Panc1 (cell line): ENCODE measurements at regions of chr7 and their contacts with region 1.

Region 1: GRCh38 chr7:77188731-77189437 is 10.7 kb downstream of the FGL2 start:
- DNase-seq: no peak
- ATAC-seq: no peak
- H3K4me3 ChIP-seq: no peak overlapping the region
- H3K27ac ChIP-seq: no peak overlapping the region
- H3K4me1 ChIP-seq: no peaks in the 10 kb centered on the region; the same call in 1 of the 2 replicates
- H3K27me3 ChIP-seq: no peaks in the 10 kb centered on the region
- CTCF ChIP-seq: no peak

Region 2: DNA sequence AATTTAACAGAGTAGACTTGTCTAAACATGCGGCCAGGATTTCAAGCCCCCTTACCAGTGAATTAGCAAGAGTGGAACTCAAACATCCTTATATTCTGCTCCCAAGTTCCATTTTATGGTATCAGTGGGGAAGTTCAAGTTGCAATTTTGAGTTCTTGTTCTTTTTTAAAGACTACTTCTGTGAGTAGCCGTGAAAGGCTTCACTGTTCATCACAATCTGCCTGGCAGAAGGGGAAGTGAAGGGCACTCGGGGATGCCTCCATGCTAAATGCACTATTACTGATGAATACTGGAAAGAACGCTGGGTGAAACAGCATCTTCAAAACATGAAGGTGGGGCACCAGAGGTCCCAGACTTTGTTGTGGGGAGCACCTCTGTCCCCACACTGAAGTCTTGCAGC is 33.2 kb after region 1 on chr7:
- CTCF ChIA-PET with region 1: no interaction called
- POLR2A ChIA-PET with region 1: no interaction called
- in situ Hi-C with region 1: no loop called
- intact Hi-C with region 1: loop called (anchors 1 kb)
- DNase-seq: no peak
- ATAC-seq: no peak
- H3K4me3 ChIP-seq: no peak overlapping the region
- H3K27ac ChIP-seq: no peak overlapping the region
- H3K4me1 ChIP-seq: no peaks in the 10 kb centered on the region
- H3K27me3 ChIP-seq: no peaks in the 10 kb centered on the region
- CTCF ChIP-seq: no peak